ENCODE measurements at regions of chr11 and their contacts with region 1.

Region 1: DNA sequence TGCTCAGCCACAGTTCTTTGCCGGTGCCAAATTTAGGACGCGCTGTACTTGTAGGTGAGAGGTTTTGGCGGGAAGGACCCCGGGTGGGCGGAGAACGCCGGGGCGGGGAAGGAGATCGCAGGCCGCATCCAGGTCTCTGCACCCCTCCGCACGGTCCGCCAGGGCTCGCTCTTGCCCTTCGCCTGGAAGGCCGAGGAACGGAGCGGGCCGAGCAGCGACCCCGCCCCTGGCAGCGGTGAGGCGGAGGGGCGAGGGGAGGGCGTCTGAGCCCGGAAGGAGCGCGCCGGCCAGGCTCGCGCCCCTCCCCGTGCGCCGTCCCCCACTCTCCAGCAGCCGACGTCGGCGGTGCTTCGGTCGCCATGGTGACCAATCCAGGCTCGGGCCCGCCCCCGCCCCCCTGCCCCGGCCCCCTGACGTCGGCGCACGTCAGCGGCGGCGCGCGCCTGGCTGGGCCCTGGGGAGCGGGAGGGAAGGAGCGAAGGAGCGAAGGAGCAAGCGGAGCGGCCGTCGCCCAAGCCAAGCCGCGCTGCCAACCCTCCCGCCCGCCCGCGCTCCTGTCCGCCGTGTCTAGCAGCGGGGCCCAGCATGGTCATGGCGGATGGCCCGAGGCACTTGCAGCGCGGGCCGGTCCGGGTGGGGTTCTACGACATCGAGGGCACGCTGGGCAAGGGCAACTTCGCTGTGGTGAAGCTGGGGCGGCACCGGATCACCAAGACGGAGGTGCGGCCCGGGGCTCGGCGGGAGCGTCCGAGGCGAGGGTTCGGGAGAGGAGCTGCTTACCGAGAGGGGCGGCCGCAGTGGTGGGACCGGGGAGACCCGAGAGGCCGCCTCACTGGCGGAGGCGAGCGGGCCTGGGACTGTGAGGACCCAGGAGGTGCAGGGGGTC is at the start of gene SIK2:
- DNase-seq: peak; percentile 80 to 90
- ATAC-seq: peak; percentile 81 to 82
- H3K4me3 ChIP-seq: peak within 1 kb of the TSS; percentile 72 to 94 (median 88)
- H3K27ac ChIP-seq: peak within 1 kb of the TSS; percentile 90 to 98 (median 97)
- H3K4me1 ChIP-seq: peaks cover 40 to 41% of the 10 kb centered on the region in 2 donors
- H3K27me3 ChIP-seq: no peaks in the 10 kb centered on the region
- CTCF ChIP-seq: peak; percentile 94 to 99 (median 95)
- POLR2A ChIP-seq: peak; percentile 55 to 72
- total RNA-seq, gene SIK2: 16.5 to 98.7 (median 43.8) TPM

Region 2: GRCh38 chr11:111540114-111540936 is 61.9 kb before region 1 on chr11 and contains the start of gene LAYN:
- in situ Hi-C with region 1: no loop called
- intact Hi-C with region 1: no loop called
- DNase-seq: peak in 1 of 2 donors; percentile 18
- ATAC-seq: peak; percentile 12 to 37
- H3K4me3 ChIP-seq: peak within 1 kb of the TSS; percentile 60 to 75 (median 66)
- H3K27ac ChIP-seq: peak within 1 kb of the TSS; percentile 49 to 72 (median 67)
- H3K4me1 ChIP-seq: peaks cover 10 to 30% of the 10 kb centered on the region in 2 donors
- H3K27me3 ChIP-seq: no peaks in the 10 kb centered on the region
- CTCF ChIP-seq: no peak
- POLR2A ChIP-seq: peak in 1 of 2 donors; percentile 27
- total RNA-seq, gene LAYN: 0.46 to 3.7 (median 0.72) TPM in 3 of 4 donors, not detected in the other

Region 3: GRCh38 chr11:111676878-111677585 is 74.8 kb after region 1 on chr11:
- in situ Hi-C with region 1: no loop called
- intact Hi-C with region 1: loop called (anchors 5 kb)
- DNase-seq: no peak
- ATAC-seq: peak; percentile 63 to 84
- H3K4me3 ChIP-seq: no peak overlapping the region
- H3K27ac ChIP-seq: peak overlapping the region; percentile 68 to 77 (median 71)
- H3K4me1 ChIP-seq: peaks cover 29 to 40% of the 10 kb centered on the region in 2 donors
- H3K27me3 ChIP-seq: no peaks in the 10 kb centered on the region
- CTCF ChIP-seq: no peak
- POLR2A ChIP-seq: no peak

Region 4: DNA sequence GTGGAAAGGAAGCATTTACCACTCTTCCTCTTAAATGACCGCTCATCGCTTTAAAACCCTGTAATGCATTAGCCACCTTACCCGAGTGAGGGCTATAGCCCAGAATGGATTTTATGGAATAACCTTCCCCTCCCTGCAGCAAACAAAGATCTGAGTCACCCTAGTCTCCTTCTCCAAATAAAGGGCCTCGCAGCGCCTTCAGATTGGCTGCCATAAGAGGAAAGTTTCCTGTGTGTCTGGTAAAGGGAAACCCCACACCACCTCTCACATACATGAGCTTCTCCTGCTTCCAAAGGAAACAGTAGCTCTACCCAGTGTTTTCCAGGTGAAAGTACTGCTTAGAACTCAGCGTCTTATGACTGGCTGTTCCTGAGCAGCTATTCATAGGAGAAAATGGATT is 116.2 kb after region 1 on chr11:
- in situ Hi-C with region 1: no loop called
- intact Hi-C with region 1: loop called (anchors 5 kb)
- DNase-seq: peak in 1 of 2 donors; percentile 70
- ATAC-seq: peak; percentile 93
- H3K4me3 ChIP-seq: peak overlapping the region in 2 of 4 donors; percentile 0 to 17
- H3K27ac ChIP-seq: peak overlapping the region; percentile 85 to 97 (median 88)
- H3K4me1 ChIP-seq: peaks cover 27 to 29% of the 10 kb centered on the region in 2 donors
- H3K27me3 ChIP-seq: no peaks in the 10 kb centered on the region
- CTCF ChIP-seq: no peak
- POLR2A ChIP-seq: peak; percentile 26 to 76

Region 5: DNA sequence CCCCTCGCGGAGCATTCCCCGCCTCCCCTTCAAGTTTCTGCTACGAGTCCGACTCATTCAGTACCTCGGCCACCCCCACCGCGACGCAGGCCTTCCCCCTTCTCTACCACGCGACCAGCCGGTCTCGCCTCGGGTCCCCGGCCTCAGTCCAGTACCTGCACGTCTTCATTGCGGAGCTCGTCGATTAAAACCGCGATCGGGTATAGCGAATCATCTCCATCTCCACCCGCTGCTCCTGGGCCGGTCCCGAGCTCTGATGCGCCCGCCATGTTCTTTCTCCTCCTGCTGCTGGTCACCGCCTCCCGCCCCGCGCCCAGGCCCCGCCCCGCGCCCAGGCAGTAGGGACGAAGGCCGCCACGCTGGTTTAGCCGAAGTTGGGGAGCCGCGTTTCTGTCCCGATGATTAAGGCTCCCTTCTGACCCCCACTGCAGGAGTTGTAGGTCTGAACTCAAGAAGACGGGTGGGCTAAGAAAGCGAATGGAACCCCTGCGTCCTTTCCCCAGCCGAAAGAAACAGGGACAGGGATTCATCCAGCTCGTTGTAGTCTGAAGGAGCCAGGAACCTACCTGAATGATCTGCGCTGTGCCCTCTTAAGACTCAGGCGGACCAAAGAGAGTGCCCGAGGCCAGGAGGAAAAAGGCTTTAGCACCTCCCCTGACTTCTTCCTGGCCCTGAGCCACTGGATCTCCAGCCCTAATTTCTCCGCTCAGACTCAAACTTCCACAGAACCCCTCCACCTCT is 164.0 kb after region 1 on chr11 and contains the start of gene PPP2R1B:
- in situ Hi-C with region 1: no loop called
- intact Hi-C with region 1: loop called (anchors 1 kb)
- DNase-seq: peak; percentile 55 to 67
- ATAC-seq: peak; percentile 94 to 95
- H3K4me3 ChIP-seq: peak within 1 kb of the TSS; percentile 84 to 97 (median 94)
- H3K27ac ChIP-seq: peak within 1 kb of the TSS; percentile 89 to 94 (median 92)
- H3K4me1 ChIP-seq: peaks cover 14 to 15% of the 10 kb centered on the region in 2 donors
- H3K27me3 ChIP-seq: no peaks in the 10 kb centered on the region
- CTCF ChIP-seq: no peak
- POLR2A ChIP-seq: peak; percentile 45 to 65
- total RNA-seq, gene PPP2R1B: 7.3 to 16.0 (median 9.4) TPM

Region 6: DNA sequence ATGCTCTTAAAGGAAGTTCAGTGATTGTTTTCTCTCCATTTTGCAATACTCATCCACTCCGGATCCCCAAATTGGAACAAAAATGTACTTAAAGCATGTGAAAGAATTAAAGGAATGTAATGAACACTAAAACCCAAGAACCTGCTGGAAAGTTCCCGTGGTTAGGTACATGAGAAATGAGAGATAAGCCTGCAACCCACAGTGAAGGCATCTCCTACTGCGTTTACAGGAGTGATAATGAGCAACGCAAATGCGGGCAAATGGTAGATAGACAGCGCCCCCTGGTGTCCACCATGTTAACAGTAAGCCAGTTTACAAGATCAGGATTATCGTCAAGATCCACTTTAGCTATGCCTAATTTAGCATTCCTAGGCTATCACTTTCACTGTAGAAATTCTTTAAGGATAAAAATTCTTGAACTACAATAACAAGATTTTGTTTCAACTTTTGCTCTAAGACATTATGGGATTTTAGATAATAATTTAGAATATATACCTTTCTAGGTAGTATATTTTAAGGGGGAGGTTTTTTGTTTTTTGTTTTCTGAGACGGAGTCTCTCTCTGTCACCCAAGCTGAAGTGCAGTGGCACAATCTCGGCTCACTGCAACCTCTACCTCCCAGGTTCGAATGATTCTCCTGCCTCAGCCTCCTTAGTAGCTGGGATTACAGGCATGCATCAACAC is 239.3 kb after region 1 on chr11:
- in situ Hi-C with region 1: loop called in 1 of 4 experiments (anchors 5 kb)
- intact Hi-C with region 1: loop called (anchors 1 kb)
- DNase-seq: peak; percentile 70 to 86
- ATAC-seq: peak; percentile 83 to 85
- H3K4me3 ChIP-seq: no peak overlapping the region
- H3K27ac ChIP-seq: peak overlapping the region; percentile 39 to 81 (median 72)
- H3K4me1 ChIP-seq: peaks cover 32 to 39% of the 10 kb centered on the region in 2 donors
- H3K27me3 ChIP-seq: no peaks in the 10 kb centered on the region
- CTCF ChIP-seq: peak; percentile 83 to 93 (median 90)
- POLR2A ChIP-seq: no peak